HepG2 (cell line): ENCODE measurements at regions of chr11 and their contacts with region 1.

Region 1: GRCh38 chr11:5123802-5124521 is 14.2 kb downstream of the OR52A5 start:
- DNase-seq: peak; percentile 46
- ATAC-seq: peak; percentile 86
- H3K4me3 ChIP-seq: no peak overlapping the region
- H3K27ac ChIP-seq: no peak overlapping the region
- H3K4me1 ChIP-seq: no peaks in the 10 kb centered on the region
- H3K27me3 ChIP-seq: peaks cover 0 to 4% of the 10 kb centered on the region in 2 experiments; a peak in 1 of 5 replicates
- CTCF ChIP-seq: peak; percentile 76
- EP300 ChIP-seq: no peak
- POLR2A ChIP-seq: no peak
- RAD21 ChIP-seq: peak; percentile 33; the same call in 1 of the 2 replicates

Region 2: GRCh38 chr11:5380740-5381342 is 256.9 kb after region 1 on chr11:
- CTCF ChIA-PET with region 1: interaction called, 18 read pairs
- POLR2A ChIA-PET with region 1: no interaction called
- in situ Hi-C with region 1: loop called (anchors 10 kb)
- intact Hi-C with region 1: no loop called
- DNase-seq: peak; percentile 52
- ATAC-seq: peak; percentile 95
- H3K4me3 ChIP-seq: no peak overlapping the region
- H3K27ac ChIP-seq: no peak overlapping the region
- H3K4me1 ChIP-seq: no peaks in the 10 kb centered on the region
- H3K27me3 ChIP-seq: no peaks in the 10 kb centered on the region
- CTCF ChIP-seq: peak; percentile 80
- EP300 ChIP-seq: no peak
- POLR2A ChIP-seq: no peak
- RAD21 ChIP-seq: peak; percentile 44; the same call in 1 of the 2 replicates